ENCODE measurements at regions of chr2 and their contacts with region 1.

Region 1: GRCh38 chr2:74833418-74834233 is at the start of gene HK2:
- DNase-seq: peak; percentile 89
- H3K4me3 ChIP-seq: peak within 1 kb of the TSS; percentile 61 to 93 (median 92)
- H3K27ac ChIP-seq: peak within 1 kb of the TSS; percentile 74
- H3K4me1 ChIP-seq: peaks cover 27% of the 10 kb centered on the region
- H3K27me3 ChIP-seq: no peaks in the 10 kb centered on the region
- CTCF ChIP-seq: no peak
- total RNA-seq, gene HK2: 13.0 to 56.1 TPM

Region 2: DNA sequence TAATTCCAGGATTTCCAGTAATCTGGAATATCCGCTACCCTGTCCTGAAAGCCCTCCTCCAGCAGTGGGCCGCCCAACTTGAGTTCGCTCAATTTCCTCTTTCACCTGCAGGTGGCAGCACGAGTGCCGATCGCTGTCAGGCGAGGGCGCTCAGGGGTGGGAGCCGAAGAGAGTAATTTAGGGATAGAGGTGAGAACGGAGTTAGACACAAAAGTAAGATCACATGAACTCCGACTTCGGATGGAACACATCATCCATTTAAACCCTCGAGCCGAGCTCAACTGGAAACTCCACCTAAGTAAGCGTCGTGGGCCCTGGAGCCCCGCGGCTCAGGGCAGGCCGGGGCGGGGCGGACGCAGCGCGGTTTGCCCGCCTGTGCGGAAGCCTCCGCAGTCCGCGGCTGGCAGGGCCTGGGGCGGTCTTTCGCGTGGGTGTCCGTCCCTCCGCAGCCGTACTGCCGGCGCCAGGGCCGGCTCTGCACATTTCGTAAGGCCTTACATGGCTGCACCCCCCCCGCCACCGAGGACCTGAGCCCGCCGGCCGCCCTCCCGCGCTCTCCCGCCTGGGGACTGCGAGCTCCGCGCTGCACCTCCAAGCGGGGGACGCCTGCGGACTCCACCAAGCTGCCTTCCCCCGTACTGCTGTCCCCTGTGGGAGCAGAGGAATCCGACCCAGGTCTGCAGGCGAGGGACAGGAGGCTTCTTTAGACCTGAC is 118.4 kb before region 1 on chr2:
- CTCF ChIA-PET with region 1: interaction called, 3 read pairs
- dilution Hi-C with region 1: no loop called
- in situ Hi-C with region 1: no loop called
- intact Hi-C with region 1: loop called (anchors 1 kb)
- DNase-seq: peak; percentile 78
- H3K4me3 ChIP-seq: peak overlapping the region; percentile 46 to 67 (median 50)
- H3K27ac ChIP-seq: peak overlapping the region; percentile 60
- H3K4me1 ChIP-seq: peaks cover 40% of the 10 kb centered on the region
- H3K27me3 ChIP-seq: no peaks in the 10 kb centered on the region
- CTCF ChIP-seq: peak; percentile 90 to 91

Region 3: GRCh38 chr2:74740389-74741075 is 93.1 kb before region 1 on chr2:
- CTCF ChIA-PET with region 1: no interaction called
- dilution Hi-C with region 1: no loop called
- in situ Hi-C with region 1: no loop called
- intact Hi-C with region 1: loop called (anchors 1 kb)
- DNase-seq: peak; percentile 98
- H3K4me3 ChIP-seq: no peak overlapping the region
- H3K27ac ChIP-seq: peak overlapping the region; percentile 90
- H3K4me1 ChIP-seq: peaks cover 31% of the 10 kb centered on the region
- H3K27me3 ChIP-seq: no peaks in the 10 kb centered on the region
- CTCF ChIP-seq: peak in 1 of 2 donors; percentile 29

Region 4: DNA sequence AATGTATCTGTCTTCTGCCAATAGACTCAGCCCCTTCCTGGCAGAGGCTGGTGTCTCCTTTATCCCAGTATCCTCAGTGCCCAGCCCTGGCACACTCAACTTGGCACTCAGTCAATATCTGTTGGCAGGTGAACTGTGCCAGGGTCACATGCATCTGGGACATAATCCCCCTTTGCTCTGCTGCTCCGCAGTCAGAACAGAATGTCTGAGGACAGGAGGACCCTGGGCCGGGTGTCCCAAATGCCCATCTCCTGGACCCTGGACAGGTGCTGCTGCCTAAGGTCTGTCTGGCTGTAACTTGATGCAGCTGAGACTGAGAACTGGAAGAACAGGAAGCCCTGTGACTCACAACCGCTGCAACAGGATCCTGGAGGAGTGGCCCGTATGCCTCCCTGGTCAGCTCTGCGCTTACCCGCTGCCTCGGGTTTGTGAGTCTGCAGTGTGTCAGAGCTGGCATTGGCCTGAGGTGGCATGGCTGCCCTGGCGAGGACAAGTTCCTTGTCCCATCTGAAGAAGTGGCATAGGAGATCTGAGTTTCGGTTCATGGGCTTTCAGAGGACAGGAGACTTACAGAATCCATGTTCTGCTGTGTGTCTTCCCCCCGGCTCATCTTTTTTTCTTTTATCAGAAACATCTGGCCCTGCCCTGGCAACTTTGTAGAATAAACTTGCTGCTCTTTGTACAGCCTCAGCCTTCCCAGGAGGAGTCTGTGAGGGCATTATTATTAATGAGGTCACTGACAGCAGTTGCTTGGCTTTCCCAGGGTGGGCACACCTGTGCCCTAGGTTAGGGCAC is 11.8 kb after region 1 on chr2:
- CTCF ChIA-PET with region 1: no interaction called
- dilution Hi-C with region 1: no loop called
- in situ Hi-C with region 1: no loop called
- intact Hi-C with region 1: loop called (anchors 1 kb)
- DNase-seq: peak; percentile 97
- H3K4me3 ChIP-seq: peak overlapping the region in 1 of 3 experiments; percentile 14
- H3K27ac ChIP-seq: peak overlapping the region; percentile 89
- H3K4me1 ChIP-seq: peaks cover 78% of the 10 kb centered on the region
- H3K27me3 ChIP-seq: no peaks in the 10 kb centered on the region
- CTCF ChIP-seq: no peak

Region 5: DNA sequence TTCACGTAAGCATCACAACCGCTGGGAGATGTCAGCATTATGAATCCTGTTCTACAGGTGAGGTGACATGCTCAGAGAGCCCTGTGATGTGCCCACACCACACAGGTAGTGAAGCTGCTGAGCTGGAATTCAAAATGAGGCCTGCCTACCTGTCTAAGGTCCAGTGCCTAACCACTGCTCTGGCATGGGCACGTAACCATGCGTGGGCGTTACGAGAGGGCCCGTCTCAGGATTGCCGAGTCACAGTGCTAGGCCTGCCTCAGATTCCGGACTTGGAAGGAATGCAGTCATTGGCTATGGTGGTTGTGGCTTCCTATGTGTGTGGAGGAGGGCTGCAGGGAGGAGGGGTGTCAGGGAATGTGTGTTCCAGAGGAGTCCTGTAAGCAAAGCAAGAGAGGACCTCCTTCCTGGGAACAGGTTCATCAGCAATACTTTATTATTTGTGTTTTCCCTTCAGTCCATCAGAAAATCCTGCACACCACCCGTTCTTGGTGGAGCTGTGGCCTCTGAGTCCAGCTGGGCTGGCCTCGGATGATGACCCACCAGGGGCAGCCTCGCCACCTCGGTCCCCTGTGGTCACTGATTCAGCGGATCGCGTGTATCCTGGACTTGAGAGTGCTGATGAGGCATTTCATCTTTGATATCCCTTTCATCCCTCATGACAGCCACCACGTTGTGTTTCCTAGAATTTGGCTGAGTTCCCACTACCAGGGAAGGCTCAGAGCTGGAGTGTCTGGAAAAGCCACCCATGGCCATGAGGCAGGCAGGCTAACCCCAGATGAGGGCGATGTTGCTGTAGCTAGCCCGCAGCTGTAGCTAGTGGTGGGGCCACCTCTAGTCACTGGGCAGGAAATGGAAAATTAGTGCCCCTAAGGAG is 31.5 kb after region 1 on chr2:
- CTCF ChIA-PET with region 1: no interaction called
- dilution Hi-C with region 1: no loop called
- in situ Hi-C with region 1: no loop called
- intact Hi-C with region 1: loop called (anchors 2 kb)
- DNase-seq: peak; percentile 89
- H3K4me3 ChIP-seq: no peak overlapping the region
- H3K27ac ChIP-seq: peak overlapping the region; percentile 52
- H3K4me1 ChIP-seq: peaks cover 26% of the 10 kb centered on the region
- H3K27me3 ChIP-seq: no peaks in the 10 kb centered on the region
- CTCF ChIP-seq: peak in 1 of 2 donors; percentile 16

Region 6: GRCh38 chr2:74876081-74876886 is 42.7 kb after region 1 on chr2:
- CTCF ChIA-PET with region 1: no interaction called
- dilution Hi-C with region 1: no loop called
- in situ Hi-C with region 1: no loop called
- intact Hi-C with region 1: loop called (anchors 2 kb)
- DNase-seq: no peak
- H3K4me3 ChIP-seq: no peak overlapping the region
- H3K27ac ChIP-seq: no peak overlapping the region
- H3K4me1 ChIP-seq: no peaks in the 10 kb centered on the region
- H3K27me3 ChIP-seq: no peaks in the 10 kb centered on the region
- CTCF ChIP-seq: peak; percentile 21 to 48

Measured in mammary epithelial cell (primary cell).